Dorsolateral prefrontal cortex (tissue), 120 donors: ENCODE measurements at regions of chr1 and their contacts with region 1.

Region 1: DNA sequence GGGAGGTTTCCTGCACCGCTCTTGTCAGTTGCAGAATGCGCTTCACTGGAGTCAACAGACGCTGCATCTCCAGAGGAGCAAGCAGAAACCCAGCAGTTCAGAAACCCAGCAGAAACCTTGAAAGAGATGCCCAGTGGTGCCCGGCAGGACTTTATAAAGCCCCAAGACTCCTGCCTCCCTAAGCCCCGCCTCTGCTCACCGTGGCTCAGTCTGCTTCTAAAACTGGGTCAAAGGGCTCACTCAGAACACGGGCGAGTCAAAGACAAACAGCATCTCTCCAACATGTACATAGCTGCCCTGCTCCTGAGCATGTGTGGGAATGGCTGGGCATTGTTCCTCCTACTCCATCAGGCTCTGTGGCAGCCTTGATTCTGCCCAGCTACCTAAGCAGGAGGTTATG is at the start of gene HMGCS2:
- DNase-seq: no peak
- H3K4me3 ChIP-seq: no peak within 1 kb of the TSS
- H3K27ac ChIP-seq: no peak within 1 kb of the TSS
- H3K27me3 ChIP-seq: peaks cover 0 to 2% (median 0%) of the 10 kb centered on the region in 45 donors
- CTCF ChIP-seq: no peak
- total RNA-seq, gene HMGCS2: 1.1 TPM in 1 of 120 experiments, not detected in the others

Region 2: GRCh38 chr1:119711804-119712341 is 56.9 kb before region 1 on chr1 and contains the start of gene PHGDH:
- intact Hi-C with region 1: loop called in 1 of 2 experiments (anchors 2 kb)
- DNase-seq: peak; percentile 13 to 74 (median 62)
- H3K4me3 ChIP-seq: peak within 1 kb of the TSS; percentile 59 to 84 (median 70)
- H3K27ac ChIP-seq: peak within 1 kb of the TSS in 58 of 59 donors; percentile 21 to 93 (median 82)
- H3K27me3 ChIP-seq: no peaks in the 10 kb centered on the region
- CTCF ChIP-seq: peak in 2 of 56 donors; percentile 5 to 8
- total RNA-seq, gene PHGDH: 57.0 to 255 (median 124) TPM